ENCODE measurements at regions of chr20 and their contacts with region 1.

Region 1: DNA sequence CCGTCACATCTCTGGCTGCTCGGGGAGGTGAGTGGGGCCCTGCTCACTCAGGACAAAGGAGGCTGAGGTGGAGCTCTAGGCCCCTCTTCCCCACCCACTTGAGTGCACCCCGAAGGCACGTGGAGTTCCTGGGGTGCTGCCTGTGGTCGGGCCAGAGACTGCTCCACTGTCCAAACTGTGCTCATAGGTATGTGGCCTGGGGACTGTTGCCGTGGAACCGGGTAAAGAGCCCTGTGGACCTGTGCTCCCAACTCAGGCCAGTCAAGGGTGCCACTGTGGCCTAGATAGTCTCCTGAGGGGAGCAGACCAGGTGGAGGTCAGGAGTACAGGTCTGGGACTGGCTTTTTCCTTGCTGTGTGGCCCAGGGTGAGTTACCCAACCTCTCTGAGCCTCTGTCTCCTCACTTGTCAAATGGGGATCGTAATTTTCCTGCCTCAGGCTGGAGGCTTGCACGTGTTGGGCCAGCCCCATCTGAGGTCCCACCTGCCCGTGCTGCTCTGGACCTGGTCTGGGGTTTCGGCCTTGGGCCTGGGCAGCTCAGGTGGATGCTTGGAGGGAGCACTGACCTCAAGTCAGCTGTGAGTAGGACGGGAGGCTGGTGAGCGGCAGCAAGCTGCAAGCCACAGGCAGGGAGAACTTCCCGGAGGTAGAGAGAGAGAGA is 12.4 kb upstream of the NPBWR2 start:
- DNase-seq: peak in 1 of 2 donors; percentile 60
- H3K4me3 ChIP-seq: peak overlapping the region in 1 of 2 donors; percentile 22
- H3K27ac ChIP-seq: no peak overlapping the region
- H3K4me1 ChIP-seq: no peaks in the 10 kb centered on the region
- H3K27me3 ChIP-seq: peaks cover 6% of the 10 kb centered on the region
- CTCF ChIP-seq: no peak

Region 2: GRCh38 chr20:63580796-63581461 is 538.9 kb before region 1 on chr20:
- intact Hi-C with region 1: no loop called
- DNase-seq: no peak
- H3K4me3 ChIP-seq: no peak overlapping the region
- H3K27ac ChIP-seq: no peak overlapping the region
- H3K4me1 ChIP-seq: no peaks in the 10 kb centered on the region
- H3K27me3 ChIP-seq: no peaks in the 10 kb centered on the region
- CTCF ChIP-seq: no peak

Region 3: DNA sequence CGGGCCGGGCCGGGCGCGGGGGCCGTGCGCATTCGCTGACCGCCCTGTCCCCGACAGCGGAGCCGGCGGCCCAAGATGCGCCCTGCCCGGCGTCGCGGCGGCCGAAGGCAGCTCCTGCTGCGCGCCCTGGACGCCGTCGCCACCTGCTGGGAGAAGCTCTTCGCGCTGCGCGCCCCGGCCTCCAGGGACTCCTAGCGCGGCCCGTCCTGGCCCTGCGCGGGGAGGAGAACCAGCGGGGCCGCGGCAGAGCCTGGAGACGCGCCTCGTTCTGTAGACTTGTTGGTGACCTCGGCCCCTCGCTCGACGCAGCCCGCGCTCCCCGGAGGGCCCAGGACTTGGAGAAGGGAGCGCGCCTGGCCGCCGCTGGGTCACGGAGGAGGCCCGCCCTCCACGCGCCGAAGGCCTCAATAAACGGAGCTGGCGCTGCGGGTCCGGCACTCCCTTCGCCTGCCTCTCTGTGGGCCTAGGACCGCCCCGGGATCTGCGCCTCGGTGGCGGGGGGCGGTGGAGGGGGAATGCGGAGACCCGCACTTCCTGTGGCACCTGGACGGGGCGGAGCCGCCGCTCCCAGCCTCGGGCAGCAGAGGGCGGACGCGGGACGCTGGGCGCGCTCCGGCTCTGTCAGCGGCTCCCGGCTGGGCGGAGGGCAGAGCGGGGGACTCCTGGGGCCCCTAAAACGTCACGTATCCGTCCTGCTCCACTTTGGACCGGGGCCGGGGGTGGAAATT is 81.1 kb before region 1 on chr20:
- intact Hi-C with region 1: loop called (anchors 1 kb)
- DNase-seq: peak in 1 of 2 donors; percentile 78
- H3K4me3 ChIP-seq: peak overlapping the region; percentile 47 to 56
- H3K27ac ChIP-seq: no peak overlapping the region
- H3K4me1 ChIP-seq: peaks cover 5 to 20% of the 10 kb centered on the region in 2 donors
- H3K27me3 ChIP-seq: peaks cover 27% of the 10 kb centered on the region
- CTCF ChIP-seq: peak; percentile 65 to 78 (median 75)

Region 4: GRCh38 chr20:64079273-64080012 is 40.4 kb before region 1 on chr20 and contains the start of gene RGS19:
- intact Hi-C with region 1: loop called (anchors 5 kb)
- DNase-seq: peak in 1 of 2 donors; percentile 83
- H3K4me3 ChIP-seq: peak within 1 kb of the TSS; percentile 63 to 90
- H3K27ac ChIP-seq: peak within 1 kb of the TSS; percentile 73 to 78
- H3K4me1 ChIP-seq: peaks cover 17 to 30% of the 10 kb centered on the region in 2 donors
- H3K27me3 ChIP-seq: peaks cover 7% of the 10 kb centered on the region
- CTCF ChIP-seq: no peak
- total RNA-seq, gene RGS19: 109 TPM

Region 5: DNA sequence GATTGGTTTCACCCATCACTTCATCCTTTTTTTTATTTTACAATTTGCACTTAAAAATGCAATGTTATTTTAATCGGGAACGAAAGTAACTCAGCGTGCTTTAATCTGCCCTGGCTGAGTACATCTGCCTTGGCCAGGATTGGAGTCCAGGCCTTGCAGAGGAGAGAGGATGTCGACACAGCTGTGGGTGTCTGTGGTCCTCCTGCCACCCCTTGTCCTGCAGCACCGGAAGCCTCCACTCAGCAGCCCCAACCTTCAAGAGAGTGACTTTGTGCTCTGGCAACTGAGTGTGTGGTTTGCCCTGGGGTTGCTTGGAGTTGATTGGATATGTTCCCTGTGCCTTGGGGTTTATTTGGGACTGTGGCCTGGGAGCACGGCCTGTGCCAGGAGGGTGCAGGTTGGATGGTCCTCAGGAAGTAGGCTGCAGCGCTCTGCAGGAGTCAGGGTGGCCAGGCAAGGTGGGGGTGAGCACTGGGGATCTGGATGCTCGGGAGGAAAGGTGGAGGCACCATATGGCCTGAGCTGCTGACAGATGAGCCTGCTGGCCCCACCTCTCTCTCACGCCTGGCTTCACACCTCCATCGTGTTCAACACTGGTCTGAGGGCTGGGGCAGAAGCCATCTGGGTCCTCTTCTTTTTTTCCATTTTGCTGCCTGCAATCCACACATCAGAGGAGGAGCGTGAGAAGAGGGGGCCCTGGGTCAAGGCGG is 48.7 kb after region 1 on chr20:
- intact Hi-C with region 1: no loop called
- DNase-seq: no peak
- H3K4me3 ChIP-seq: no peak overlapping the region
- H3K27ac ChIP-seq: no peak overlapping the region
- H3K4me1 ChIP-seq: no peaks in the 10 kb centered on the region
- H3K27me3 ChIP-seq: no peaks in the 10 kb centered on the region
- CTCF ChIP-seq: no peak

Measured in ascending aorta (tissue), 2 donors.